ENCODE measurements at regions of chr18 and their contacts with region 1.

Region 1: GRCh38 chr18:2547477-2548087 is 23.7 kb downstream of the METTL4 start:
- DNase-seq: no peak
- H3K4me3 ChIP-seq: no peak overlapping the region
- H3K27ac ChIP-seq: no peak overlapping the region
- H3K4me1 ChIP-seq: no peaks in the 10 kb centered on the region
- H3K27me3 ChIP-seq: no peaks in the 10 kb centered on the region
- CTCF ChIP-seq: peak; percentile 84

Region 2: GRCh38 chr18:864872-865273 is 1682.7 kb before region 1 on chr18:
- CTCF ChIA-PET with region 1: no interaction called
- POLR2A ChIA-PET with region 1: no interaction called
- intact Hi-C with region 1: loop called (anchors 1 kb)
- DNase-seq: peak; percentile 52 to 68
- H3K4me3 ChIP-seq: no peak overlapping the region
- H3K27ac ChIP-seq: no peak overlapping the region
- H3K4me1 ChIP-seq: no peaks in the 10 kb centered on the region
- H3K27me3 ChIP-seq: no peaks in the 10 kb centered on the region
- CTCF ChIP-seq: peak; percentile 96

Region 3: DNA sequence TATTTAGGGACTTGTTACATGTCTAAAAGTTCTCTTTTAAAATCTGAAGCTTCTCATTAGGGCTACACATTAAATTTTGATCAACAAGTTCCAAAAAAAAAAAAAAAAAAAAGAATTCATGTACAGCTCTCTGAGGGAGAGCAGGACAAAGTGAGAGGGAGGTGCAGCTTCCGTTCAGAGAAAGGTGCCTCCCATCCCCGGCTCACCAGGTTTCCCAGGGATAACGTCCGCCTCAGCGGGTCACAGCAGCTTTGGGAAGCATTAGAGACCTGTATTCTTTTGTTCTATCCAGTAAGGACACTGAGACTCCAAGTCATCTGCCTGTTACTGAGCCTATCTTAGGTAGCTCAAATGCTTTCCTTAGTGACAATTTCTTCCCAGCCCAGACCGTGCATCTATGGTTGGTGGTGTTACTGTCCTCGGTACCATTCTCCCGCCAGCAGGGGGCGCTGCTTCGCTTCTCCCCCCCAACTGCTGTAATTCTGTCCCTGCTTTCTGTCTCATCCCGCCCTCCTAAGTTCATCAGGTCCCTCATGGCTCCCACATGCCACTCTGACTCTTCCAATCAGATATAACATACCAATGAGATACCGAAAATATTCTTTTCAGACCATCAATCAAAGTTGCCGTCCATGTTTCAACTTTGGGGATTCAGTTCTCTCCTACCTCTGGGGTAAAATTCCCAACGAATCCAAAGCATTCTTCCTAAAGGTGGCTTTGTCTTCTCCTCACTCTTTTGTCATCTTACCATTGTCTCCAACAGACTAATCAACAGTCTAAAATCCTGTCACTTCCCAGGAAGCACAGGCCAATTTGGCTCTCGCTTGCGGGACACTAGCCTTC is 442.7 kb before region 1 on chr18:
- CTCF ChIA-PET with region 1: no interaction called
- POLR2A ChIA-PET with region 1: no interaction called
- intact Hi-C with region 1: loop called (anchors 2 kb)
- DNase-seq: peak in 1 of 2 experiments; percentile 43
- H3K4me3 ChIP-seq: no peak overlapping the region
- H3K27ac ChIP-seq: no peak overlapping the region
- H3K4me1 ChIP-seq: no peaks in the 10 kb centered on the region
- H3K27me3 ChIP-seq: no peaks in the 10 kb centered on the region
- CTCF ChIP-seq: peak; percentile 81

Region 4: GRCh38 chr18:2411381-2411960 is 136.1 kb before region 1 on chr18:
- CTCF ChIA-PET with region 1: no interaction called
- POLR2A ChIA-PET with region 1: interaction called, 14 read pairs
- intact Hi-C with region 1: loop called (anchors 2 kb)
- DNase-seq: peak; percentile 12 to 75
- H3K4me3 ChIP-seq: no peak overlapping the region; the same call in 1 of the 2 replicates
- H3K27ac ChIP-seq: peak overlapping the region; percentile 70
- H3K4me1 ChIP-seq: peaks cover 34% of the 10 kb centered on the region
- H3K27me3 ChIP-seq: no peaks in the 10 kb centered on the region
- CTCF ChIP-seq: no peak

Measured in PC-9 (cell line).